BJ (cell line): ENCODE measurements at regions of chr21 and their contacts with region 1.

Region 1: DNA sequence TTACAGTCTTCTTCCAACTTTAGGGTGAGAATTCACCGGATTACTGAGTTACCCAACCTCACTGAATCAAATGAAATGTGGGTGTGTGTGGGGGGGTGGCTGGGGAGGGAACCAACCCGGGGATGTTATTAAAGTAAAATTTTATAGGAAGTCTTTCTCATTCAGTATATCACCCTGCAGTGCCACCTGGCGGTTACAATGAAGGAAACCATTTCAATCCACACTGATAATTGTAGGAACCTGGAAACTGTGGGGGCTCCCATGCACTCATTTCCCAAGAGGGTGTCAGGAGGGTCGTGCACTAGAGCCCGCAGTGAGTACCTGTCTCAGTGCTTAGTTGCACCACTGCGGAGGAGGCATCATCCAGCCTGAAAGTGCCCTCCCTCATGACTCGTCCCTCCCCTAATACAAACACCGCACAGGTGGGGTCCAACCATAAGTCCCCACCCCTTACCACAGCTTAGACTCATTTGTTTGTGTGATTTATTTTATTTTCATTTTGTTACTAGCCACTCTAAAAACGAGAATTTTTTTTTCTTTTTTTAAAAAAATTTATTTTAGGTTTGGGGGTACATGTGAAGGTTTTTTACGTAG is 29.1 kb upstream of the IGSF5 start:
- DNase-seq: no peak
- H3K4me3 ChIP-seq: no peak overlapping the region
- H3K27me3 ChIP-seq: no peaks in the 10 kb centered on the region
- CTCF ChIP-seq: peak; percentile 65

Region 2: GRCh38 chr21:39523399-39523798 is 192.5 kb before region 1 on chr21:
- CTCF ChIA-PET with region 1: interaction called, 280 read pairs
- POLR2A ChIA-PET with region 1: no interaction called
- DNase-seq: no peak
- H3K4me3 ChIP-seq: no peak overlapping the region
- H3K27me3 ChIP-seq: no peaks in the 10 kb centered on the region
- CTCF ChIP-seq: no peak

Region 3: GRCh38 chr21:39705849-39706248 is 10.1 kb before region 1 on chr21:
- CTCF ChIA-PET with region 1: interaction called, 20 read pairs
- POLR2A ChIA-PET with region 1: interaction called, 3 read pairs
- DNase-seq: no peak
- H3K4me3 ChIP-seq: no peak overlapping the region
- H3K27me3 ChIP-seq: no peaks in the 10 kb centered on the region; the same call in 1 of the 2 replicates
- CTCF ChIP-seq: peak; percentile 21; the same call in 1 of the 2 replicates